Activated CD8-positive, alpha-beta T cell treated with anti-CD3 and anti-CD28 coated beads for 36 hours (primary cell): ENCODE measurements at regions of chr12 and their contacts with region 1.

Region 1: GRCh38 chr12:92408072-92408900 is 262.6 kb upstream of the BTG1 start:
- DNase-seq: peak; percentile 81
- ATAC-seq: peak; percentile 50
- H3K4me3 Mint-ChIP-seq: no peak overlapping the region
- H3K27ac Mint-ChIP-seq: peak overlapping the region; percentile 63
- H3K4me1 Mint-ChIP-seq: peaks cover 41% of the 10 kb centered on the region
- H3K27me3 Mint-ChIP-seq: no peaks in the 10 kb centered on the region
- CTCF ChIP-seq: peak; percentile 58

Region 2: DNA sequence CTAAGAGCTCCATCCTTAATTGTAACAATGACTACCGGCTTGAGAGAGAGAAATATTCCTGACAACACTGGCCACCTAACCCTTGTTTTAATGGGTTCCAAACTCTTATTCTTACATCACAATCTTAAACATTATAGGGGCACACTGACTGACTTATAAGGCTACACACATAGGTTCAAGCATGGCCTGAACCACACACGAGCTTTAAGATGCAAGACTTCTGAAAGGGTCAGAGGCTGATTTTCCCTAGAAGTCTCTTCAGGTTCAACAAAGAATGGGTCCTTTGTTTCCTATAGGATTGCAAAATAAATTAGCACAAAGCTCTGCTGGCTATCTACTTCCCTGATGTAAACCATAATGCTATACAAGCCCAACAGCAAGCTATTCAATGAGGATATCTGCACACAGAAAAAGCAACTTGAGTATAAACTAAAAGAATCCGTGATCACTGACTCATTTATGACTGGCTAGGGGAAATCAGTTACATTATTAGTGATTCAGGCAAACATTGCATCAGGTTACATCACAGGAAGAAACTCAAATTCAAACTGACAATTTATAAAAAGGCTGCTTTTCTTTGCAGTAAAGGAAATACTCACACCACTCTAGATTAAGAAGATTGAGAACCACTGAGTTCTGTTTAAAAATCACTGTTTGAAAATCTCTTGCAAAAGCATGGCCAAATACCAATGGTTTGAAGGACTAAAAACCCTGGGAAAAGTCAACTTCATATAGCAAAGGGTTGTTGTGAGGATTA is 271.1 kb before region 1 on chr12:
- CTCF ChIA-PET with region 1: no interaction called
- POLR2A ChIA-PET with region 1: interaction called, 88 read pairs
- intact Hi-C with region 1: loop called (anchors 5 kb)
- DNase-seq: no peak
- ATAC-seq: peak; percentile 41
- H3K4me3 Mint-ChIP-seq: peak overlapping the region; percentile 97
- H3K27ac Mint-ChIP-seq: peak overlapping the region; percentile 94
- H3K4me1 Mint-ChIP-seq: peaks cover 47% of the 10 kb centered on the region
- H3K27me3 Mint-ChIP-seq: no peaks in the 10 kb centered on the region
- CTCF ChIP-seq: no peak

Region 3: GRCh38 chr12:92224685-92225331 is 183.5 kb before region 1 on chr12:
- CTCF ChIA-PET with region 1: no interaction called
- POLR2A ChIA-PET with region 1: no interaction called
- intact Hi-C with region 1: no loop called
- DNase-seq: peak; percentile 21
- ATAC-seq: peak; percentile 66
- H3K4me3 Mint-ChIP-seq: no peak overlapping the region
- H3K27ac Mint-ChIP-seq: no peak overlapping the region
- H3K4me1 Mint-ChIP-seq: peaks cover 12% of the 10 kb centered on the region
- H3K27me3 Mint-ChIP-seq: no peaks in the 10 kb centered on the region
- CTCF ChIP-seq: no peak

Region 4: GRCh38 chr12:92324849-92325500 is 83.3 kb before region 1 on chr12:
- CTCF ChIA-PET with region 1: no interaction called
- POLR2A ChIA-PET with region 1: no interaction called
- intact Hi-C with region 1: no loop called
- DNase-seq: no peak
- ATAC-seq: no peak
- H3K4me3 Mint-ChIP-seq: no peak overlapping the region
- H3K27ac Mint-ChIP-seq: no peak overlapping the region
- H3K4me1 Mint-ChIP-seq: peaks cover 7% of the 10 kb centered on the region
- H3K27me3 Mint-ChIP-seq: no peaks in the 10 kb centered on the region
- CTCF ChIP-seq: no peak

Region 5: DNA sequence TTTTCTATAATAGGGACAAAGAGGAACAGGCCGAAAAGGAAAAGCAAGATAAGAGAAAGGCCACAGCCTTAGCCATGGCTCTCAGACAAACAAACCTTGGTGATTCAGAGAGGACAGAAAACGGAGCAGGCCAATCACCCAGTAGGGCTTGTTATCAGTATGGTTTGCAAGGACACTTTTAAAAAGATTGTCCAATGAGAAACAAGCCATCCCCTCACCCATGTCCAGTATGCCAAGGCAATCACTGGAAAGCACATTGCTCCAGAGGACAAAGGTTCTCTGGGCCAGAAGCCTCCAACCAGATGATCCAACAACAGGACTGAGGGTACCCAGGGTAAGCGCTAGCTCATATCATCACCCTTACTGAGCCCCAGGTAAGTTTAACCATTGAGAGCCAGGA is 18.8 kb before region 1 on chr12:
- CTCF ChIA-PET with region 1: interaction called, 10 read pairs
- POLR2A ChIA-PET with region 1: interaction called, 5 read pairs
- intact Hi-C with region 1: no loop called
- DNase-seq: no peak
- ATAC-seq: no peak
- H3K4me3 Mint-ChIP-seq: no peak overlapping the region
- H3K27ac Mint-ChIP-seq: no peak overlapping the region
- H3K4me1 Mint-ChIP-seq: peaks cover 28% of the 10 kb centered on the region
- H3K27me3 Mint-ChIP-seq: no peaks in the 10 kb centered on the region
- CTCF ChIP-seq: no peak

Region 6: GRCh38 chr12:92431146-92431545 is 22.9 kb after region 1 on chr12:
- CTCF ChIA-PET with region 1: interaction called, 16 read pairs
- POLR2A ChIA-PET with region 1: interaction called, 3 read pairs
- intact Hi-C with region 1: no loop called
- DNase-seq: peak; percentile 52
- ATAC-seq: peak; percentile 49
- H3K4me3 Mint-ChIP-seq: no peak overlapping the region
- H3K27ac Mint-ChIP-seq: no peak overlapping the region
- H3K4me1 Mint-ChIP-seq: peaks cover 28% of the 10 kb centered on the region
- H3K27me3 Mint-ChIP-seq: no peaks in the 10 kb centered on the region
- CTCF ChIP-seq: no peak

Region 7: DNA sequence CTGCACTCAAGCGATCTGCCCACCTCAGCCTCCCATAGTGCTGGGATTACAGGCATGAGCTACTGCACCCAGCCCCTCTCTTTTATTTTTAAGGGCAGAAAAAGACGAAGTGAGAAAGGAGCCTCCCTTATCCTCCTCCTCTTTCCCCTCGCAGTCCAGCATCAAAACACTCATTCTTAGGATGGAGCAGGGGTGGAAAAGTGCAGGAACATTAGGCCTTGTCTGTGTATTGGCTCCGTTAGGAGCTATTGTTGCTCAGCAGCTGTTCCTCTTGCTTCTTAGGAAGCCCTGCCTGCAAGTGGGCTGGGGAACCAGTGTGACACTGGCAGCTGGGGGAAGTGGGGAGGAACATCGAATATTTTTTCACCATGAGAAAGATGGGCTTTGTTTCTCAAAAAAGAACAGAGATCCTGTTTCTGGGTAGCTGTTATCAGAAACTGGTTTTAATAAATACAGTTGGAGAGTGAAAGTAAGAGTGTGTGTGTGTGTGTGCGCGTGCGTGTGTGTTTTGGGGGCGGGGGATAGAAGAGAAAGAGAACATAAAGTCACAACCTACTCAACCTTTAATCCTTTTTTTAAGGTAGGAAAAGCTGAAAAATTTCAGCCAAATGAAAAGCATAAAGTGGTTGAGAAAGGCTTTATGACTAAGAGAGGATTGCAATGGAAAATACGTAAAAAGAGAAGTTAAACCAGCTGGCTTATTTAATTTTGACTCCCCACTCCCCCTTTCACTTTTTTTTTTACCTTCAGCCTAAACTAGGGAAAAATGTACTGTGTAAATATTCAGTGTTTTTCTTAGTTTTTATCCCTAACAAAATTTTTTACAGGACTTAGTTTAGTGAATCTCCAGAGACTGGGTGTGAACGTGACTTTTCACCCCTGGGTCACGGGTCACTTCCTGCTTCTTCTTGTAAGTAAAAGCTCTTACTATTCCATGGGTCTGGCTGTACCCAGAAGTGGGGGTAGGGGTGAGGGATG is 97.3 kb after region 1 on chr12:
- CTCF ChIA-PET with region 1: interaction called, 10 read pairs
- POLR2A ChIA-PET with region 1: interaction called, 5 read pairs
- intact Hi-C with region 1: no loop called
- DNase-seq: peak; percentile 72
- ATAC-seq: peak; percentile 63
- H3K4me3 Mint-ChIP-seq: peak overlapping the region; percentile 73
- H3K27ac Mint-ChIP-seq: peak overlapping the region; percentile 97
- H3K4me1 Mint-ChIP-seq: peaks cover 53% of the 10 kb centered on the region
- H3K27me3 Mint-ChIP-seq: no peaks in the 10 kb centered on the region
- CTCF ChIP-seq: no peak

Region 8: GRCh38 chr12:92570056-92570753 is 161.9 kb after region 1 on chr12:
- CTCF ChIA-PET with region 1: interaction called, 18 read pairs
- POLR2A ChIA-PET with region 1: interaction called, 7 read pairs
- intact Hi-C with region 1: no loop called
- DNase-seq: peak; percentile 66
- ATAC-seq: peak; percentile 89
- H3K4me3 Mint-ChIP-seq: no peak overlapping the region
- H3K27ac Mint-ChIP-seq: no peak overlapping the region
- H3K4me1 Mint-ChIP-seq: peaks cover 19% of the 10 kb centered on the region
- H3K27me3 Mint-ChIP-seq: no peaks in the 10 kb centered on the region
- CTCF ChIP-seq: peak; percentile 97